ENCODE measurements at regions of chr14 and their contacts with region 1.

Region 1: DNA sequence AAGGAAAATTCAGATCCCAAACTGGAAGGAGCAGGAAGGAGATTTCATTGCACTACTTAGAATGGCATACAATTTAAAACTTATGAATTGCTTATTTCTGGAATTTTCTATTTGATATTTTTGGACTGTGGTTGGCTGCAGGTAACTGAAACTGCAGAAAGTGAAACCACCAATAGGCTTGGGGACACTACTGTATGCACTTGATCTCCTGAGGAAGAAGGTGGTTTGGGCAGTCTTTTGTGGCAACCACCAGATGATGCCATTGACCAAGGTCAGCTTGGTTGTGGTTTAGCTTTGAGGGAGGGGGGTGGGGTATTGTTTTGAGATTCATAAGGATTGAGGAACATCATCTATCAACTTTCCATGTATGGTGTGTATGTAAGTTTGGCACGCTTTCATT is 209.5 kb upstream of the STXBP6 start:
- DNase-seq: no peak
- ATAC-seq: no peak

Region 2: DNA sequence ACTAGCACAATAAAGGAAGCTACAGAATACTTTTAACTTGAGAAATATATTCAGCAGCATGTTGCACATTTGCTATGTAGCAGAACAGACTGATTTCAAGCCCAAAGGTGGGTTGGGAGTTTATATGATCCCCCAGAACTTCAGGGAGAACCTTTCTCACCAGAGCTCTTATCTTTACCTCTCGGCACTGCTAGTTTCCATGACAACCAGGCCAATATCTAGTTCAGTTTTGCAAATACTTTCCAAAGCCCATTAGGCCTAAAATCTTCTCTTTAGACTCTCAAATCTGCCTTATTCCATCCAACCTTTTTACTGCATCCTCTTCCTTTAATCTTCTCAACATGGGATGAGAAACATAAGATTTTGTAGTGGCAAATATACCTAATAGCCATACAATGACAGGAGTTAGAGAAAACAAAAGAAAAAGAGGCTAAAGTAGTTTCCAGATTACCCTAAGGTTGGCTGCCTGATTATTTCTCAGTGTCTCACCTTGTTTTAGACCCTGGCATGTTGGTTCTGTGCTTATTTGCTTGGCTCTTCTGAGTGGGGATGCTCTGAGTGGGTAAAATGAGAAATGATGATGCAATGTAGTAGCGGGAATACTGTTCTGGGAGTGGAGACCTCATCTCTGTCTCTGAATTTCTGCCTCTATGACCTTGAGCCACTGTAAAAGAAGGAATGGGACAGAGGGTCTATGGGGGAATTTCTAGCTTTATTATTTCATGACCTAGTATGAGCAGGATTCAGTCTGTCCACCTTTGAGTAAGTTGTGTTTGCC is 218.0 kb after region 1 on chr14:
- intact Hi-C with region 1: no loop called
- DNase-seq: no peak
- ATAC-seq: no peak

Region 3: GRCh38 chr14:26180221-26180620 is 920.8 kb after region 1 on chr14:
- intact Hi-C with region 1: loop called in 1 of 2 experiments (anchors 5 kb)
- DNase-seq: no peak
- ATAC-seq: no peak